ENCODE measurements at regions of chr5 and their contacts with region 1.

Region 1: DNA sequence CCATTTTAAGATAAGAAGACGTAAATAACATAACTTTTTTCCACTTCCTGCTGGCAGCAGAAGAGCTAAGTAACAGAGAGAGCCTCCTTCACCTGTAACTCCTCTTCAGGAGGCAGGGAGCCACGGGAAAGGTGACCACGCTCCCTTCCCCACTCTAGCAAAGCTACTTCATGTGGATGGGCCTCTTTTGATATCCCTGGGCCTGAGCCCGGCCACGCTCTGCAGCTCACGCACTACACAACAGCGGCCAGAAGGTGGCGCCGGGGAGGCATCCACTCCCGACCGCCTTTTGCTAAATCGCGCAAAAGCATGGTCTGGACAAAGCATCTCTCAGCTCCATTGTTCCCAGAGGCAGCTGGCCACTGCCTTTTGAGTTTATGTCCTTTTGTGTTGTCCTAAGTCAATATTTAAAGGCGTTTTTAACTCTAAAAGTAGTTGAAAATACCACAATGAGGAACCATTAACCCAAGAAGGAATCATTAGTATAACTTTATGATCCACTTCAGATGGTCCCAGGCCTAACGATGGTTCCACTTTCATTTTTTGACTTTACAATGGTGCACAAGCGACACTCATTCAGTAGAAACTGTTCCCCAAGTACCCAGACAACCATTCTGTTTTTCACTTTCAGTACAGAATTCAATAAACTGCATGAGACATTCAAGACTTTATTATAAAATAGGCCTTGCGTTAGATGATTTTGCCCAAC is 23.6 kb downstream of the CMBL start:
- DNase-seq: peak; percentile 81 to 91 (median 85)
- ATAC-seq: peak; percentile 67 to 89 (median 86)
- H3K4me3 ChIP-seq: no peak overlapping the region
- H3K27ac ChIP-seq: no peak overlapping the region
- H3K4me1 ChIP-seq: peaks cover 0 to 17% (median 6%) of the 10 kb centered on the region in 12 donors
- H3K27me3 ChIP-seq: no peaks in the 10 kb centered on the region
- CTCF ChIP-seq: peak; percentile 82 to 98 (median 94)
- POLR2A ChIP-seq: no peak

Region 2: GRCh38 chr5:10333154-10334006 is 49.3 kb after region 1 on chr5:
- intact Hi-C with region 1: loop called in 1 of 10 experiments (anchors 10 kb)
- DNase-seq: peak; percentile 37 to 78 (median 57)
- ATAC-seq: peak; percentile 40 to 69 (median 63)
- H3K4me3 ChIP-seq: peak overlapping the region; percentile 25 to 76 (median 62)
- H3K27ac ChIP-seq: peak overlapping the region; percentile 58 to 88 (median 81)
- H3K4me1 ChIP-seq: peaks cover 0 to 52% (median 35%) of the 10 kb centered on the region in 12 donors
- H3K27me3 ChIP-seq: peaks cover 0 to 19% (median 0%) of the 10 kb centered on the region in 9 donors
- CTCF ChIP-seq: peak in 5 of 12 donors; percentile 10 to 32 (median 29)
- POLR2A ChIP-seq: no peak

Region 3: GRCh38 chr5:10635257-10635866 is 351.3 kb after region 1 on chr5:
- intact Hi-C with region 1: loop called in 1 of 10 experiments (anchors 10 kb)
- DNase-seq: no peak
- ATAC-seq: peak in 1 of 4 donors; percentile 21
- H3K4me3 ChIP-seq: no peak overlapping the region
- H3K27ac ChIP-seq: no peak overlapping the region
- H3K4me1 ChIP-seq: peaks cover 0 to 53% (median 0%) of the 10 kb centered on the region in 12 donors
- H3K27me3 ChIP-seq: no peaks in the 10 kb centered on the region
- CTCF ChIP-seq: no peak
- POLR2A ChIP-seq: no peak

Measured in heart left ventricle (tissue), 16 donors.